ENCODE measurements at regions of chr10 and their contacts with region 1.

Region 1: GRCh38 chr10:30783939-30784500 is 154.5 kb upstream of the LYZL2 start:
- DNase-seq: peak; percentile 96

Region 2: DNA sequence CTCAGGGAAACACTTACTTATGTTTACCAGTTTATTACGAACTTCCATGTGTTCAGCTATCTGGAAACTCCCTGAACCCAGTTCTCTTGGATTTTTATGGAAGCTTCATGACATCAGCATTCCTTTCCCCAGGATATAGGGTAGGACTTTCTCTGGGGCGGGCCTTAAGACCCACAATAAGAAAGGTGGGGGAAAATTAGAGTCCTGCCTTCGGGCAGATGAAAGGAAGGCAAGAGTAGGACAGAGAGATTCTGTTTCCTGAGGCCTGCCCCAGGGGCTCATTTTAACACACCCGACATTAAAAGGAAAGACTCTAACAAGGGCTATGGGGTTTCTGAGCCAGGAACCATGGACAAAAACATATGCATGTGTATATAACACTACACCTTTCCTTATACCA is 264.4 kb before region 1 on chr10:
- intact Hi-C with region 1: no loop called
- DNase-seq: no peak

Region 3: GRCh38 chr10:30820261-30820991 is 36.4 kb after region 1 on chr10:
- intact Hi-C with region 1: loop called in 1 of 2 experiments (anchors 5 kb)
- DNase-seq: no peak

Region 4: DNA sequence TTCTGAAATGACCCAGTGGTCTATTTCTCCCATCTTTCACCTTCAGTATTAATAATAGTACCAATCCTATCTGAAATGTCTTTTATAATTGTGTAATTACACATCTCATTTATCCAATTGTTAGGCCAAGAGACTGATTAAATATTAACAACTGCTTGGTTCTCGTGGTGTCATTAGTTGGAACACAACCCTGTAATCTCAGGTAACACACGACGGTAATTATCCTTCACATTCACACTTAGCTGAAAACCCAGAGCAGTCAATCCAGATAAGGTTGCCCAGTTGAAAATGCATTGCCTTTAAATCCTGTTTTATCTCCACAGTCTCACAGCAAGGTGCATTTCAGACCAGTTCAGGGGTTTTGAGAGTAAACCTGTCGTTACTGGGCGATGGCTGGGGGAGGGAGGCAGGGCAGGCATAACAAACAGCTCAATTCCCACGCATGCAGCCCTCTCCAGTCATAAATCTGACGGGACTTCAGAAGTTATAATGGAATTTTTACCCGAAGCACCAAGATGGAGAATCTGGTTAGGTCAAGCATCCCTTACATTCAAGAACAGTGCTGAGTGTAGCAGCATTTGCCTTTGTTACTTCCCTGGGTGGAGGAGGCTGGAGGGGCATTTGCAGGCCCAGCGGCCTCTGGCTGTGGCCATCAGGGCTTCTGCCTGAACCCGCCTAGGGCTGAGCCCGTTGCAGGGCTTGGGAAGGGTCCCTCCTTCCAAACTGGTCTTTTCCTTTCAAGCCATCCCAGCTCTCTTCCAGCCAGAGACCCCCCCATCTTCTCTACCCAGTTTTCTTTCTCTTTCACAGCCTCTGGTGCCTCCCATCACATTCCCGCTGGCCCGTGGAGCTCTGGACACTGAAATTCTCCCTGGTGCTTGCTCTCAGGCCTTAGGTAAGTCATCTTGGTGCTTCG is 46.6 kb after region 1 on chr10:
- intact Hi-C with region 1: no loop called
- DNase-seq: no peak

Region 5: DNA sequence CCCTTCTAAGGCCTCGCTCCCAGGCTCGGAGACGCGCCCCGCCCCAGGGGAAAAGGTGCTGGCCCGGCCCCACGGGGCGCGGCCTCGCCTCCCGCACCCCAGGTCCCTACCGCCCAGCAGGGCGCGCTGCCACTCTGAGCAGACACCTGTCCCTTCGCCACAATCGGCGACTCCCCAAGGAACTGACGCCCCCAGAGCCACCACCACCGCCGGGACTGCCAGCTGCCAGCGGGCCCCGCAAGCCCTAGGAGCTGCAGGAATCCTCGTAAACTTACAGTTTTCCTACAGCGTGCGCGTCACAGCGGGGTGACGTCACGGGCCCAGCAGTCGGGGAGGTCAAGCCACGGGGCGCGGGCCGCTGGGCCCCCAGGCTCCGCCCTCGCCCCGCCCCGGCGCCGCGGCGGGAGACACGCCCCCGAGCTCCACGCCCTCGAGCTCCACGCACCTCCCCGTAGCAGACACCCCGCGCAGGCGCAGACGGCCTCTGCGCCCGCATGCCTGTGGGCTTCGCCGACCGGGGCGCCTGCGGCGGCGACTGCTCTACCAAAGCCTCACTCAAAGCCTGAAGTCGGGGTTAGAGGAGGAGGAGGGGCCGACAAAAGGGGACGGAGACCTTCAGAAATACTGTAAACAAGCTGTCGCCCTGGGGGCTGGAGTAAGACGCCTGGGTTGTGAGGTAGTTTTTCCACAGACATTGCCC is 247.7 kb after region 1 on chr10 and contains the start of gene ZNF438:
- intact Hi-C with region 1: loop called (anchors 5 to 10 kb)
- DNase-seq: peak; percentile 99
- total RNA-seq, gene ZNF438: 12.4 to 13.9 TPM

Region 6: GRCh38 chr10:31318854-31319601 is 535.0 kb after region 1 on chr10 and contains the start of gene ZEB1:
- intact Hi-C with region 1: loop called in 1 of 2 experiments (anchors 10 kb)
- DNase-seq: peak; percentile 92
- total RNA-seq, gene ZEB1: 118 to 141 TPM

Region 7: DNA sequence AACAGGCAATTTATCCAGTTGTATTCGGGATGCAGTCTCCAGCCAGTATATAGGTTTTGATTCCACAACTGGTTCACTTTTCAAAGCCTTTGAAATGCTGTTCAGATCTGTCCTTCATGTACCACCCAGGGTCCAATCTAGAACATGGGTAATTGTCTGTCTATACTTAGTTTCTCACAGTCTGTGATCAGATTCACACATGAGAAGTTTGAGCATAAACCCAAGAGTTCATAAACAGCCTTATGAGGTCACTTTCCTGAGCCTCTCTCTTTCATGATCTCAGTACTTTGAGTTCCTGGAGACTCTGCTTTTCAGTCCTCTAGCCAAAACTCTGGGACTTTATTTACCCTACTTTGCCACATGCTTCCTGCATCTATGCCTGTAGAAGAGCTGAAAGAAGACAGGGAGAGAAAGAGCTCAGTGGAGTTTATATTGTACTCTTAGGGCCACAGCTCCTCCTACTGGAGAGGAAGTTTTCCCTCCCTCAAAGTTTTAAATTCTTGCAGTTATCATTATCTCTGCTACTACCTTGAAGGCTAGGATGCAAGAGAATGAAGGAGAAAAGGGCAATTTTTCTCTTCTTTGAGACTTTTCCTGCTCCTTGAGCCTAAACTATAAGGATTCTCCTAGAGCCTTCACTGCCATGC is 707.0 kb after region 1 on chr10:
- intact Hi-C with region 1: loop called in 1 of 2 experiments (anchors 5 kb)
- DNase-seq: no peak

Region 8: DNA sequence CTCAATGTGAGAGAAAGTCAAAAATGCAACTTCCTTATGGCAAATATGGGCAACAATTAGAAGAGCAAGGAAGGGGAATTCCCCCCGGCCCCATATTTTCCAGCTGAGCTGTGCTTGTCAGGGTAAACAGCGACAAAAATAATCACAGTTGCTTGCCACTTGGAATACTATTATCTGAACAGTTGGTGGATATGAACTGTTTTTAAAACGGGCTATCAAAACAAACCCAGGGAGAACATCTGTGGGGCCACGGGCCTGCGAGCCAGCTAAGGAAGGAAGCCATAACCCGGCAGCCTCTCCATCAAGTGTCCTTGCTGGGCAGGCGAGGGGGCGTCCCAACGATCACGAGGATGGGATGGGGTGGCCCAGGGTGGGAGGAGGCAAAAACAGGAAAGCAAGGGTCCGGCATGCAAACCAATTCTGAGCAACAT is 916.2 kb after region 1 on chr10:
- intact Hi-C with region 1: loop called in 1 of 2 experiments (anchors 5 kb)
- DNase-seq: no peak

Measured in posterior vena cava (tissue), 2 donors.